ENCODE measurements at regions of chr16 and their contacts with region 1.

Region 1: GRCh38 chr16:19907161-19907992 is 22.7 kb upstream of the GPRC5B start:
- DNase-seq: peak; percentile 63
- ATAC-seq: peak; percentile 91 to 93

Region 2: GRCh38 chr16:20298455-20298854 is 391.1 kb after region 1 on chr16:
- intact Hi-C with region 1: loop called in 1 of 2 experiments (anchors 5 kb)
- DNase-seq: no peak
- ATAC-seq: no peak

Measured in left cardiac atrium (tissue), 4 donors.